RWPE1 (cell line): ENCODE measurements at regions of chr14 and their contacts with region 1.

Region 1: GRCh38 chr14:30214461-30215090 is 286.9 kb upstream of the PRKD1 start:
- DNase-seq: peak; percentile 45
- H3K27ac ChIP-seq: no peak overlapping the region
- CTCF ChIP-seq: peak; percentile 68

Region 2: DNA sequence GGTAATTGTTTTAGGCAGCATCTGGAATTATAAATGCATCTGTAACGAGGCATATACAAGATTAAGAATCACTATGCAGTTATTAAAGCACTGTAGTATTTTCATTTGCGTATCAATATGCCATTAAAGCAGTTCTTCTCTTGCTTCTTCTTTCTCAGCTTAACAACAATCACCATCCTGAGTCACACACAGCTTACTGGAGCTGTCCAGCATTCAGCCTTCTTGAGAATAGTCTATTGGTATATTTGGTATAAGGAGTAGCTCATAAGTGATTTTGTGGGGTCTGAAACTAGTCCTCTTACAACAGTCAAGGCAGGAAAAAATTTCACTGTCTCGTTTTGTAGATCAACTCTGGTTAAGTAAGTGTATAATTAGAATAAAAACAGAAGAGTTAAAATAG is 1971.0 kb before region 1 on chr14:
- CTCF ChIA-PET with region 1: no interaction called
- POLR2A ChIA-PET with region 1: no interaction called
- DNase-seq: peak; percentile 3
- H3K27ac ChIP-seq: no peak overlapping the region
- CTCF ChIP-seq: no peak

Region 3: DNA sequence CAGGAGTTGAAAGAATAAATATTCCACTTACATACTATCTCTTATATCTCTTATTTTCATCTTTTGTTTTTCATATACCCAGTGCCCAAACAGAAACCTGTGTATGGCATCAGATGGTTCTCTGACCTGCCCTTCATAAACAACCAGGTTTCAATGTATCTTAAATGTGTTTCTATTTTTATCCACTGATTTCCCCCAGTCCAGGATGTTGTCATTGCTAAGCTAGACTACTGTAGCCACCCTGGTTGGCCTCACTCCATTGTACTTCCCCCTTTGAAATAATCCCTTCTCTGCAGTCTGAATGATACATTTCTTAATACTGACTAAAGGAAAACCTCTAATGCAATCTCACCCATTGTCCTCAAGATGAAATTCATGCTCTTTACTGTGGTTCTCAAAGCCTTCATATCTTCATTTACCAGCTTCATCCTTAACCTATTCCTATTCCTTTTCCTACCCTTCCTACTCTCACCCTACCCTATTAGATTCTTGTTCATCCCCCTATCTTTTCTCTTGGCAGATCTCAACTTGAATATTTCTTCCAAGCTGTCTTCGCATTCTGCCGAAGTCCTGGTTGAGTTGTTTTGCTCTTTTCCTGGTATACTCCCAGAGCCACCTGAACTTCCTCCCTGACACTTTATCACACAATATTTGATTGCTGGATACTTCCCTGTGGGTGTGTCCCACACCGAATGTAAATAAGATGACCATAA is 1135.6 kb before region 1 on chr14:
- CTCF ChIA-PET with region 1: no interaction called
- POLR2A ChIA-PET with region 1: no interaction called
- DNase-seq: no peak
- H3K27ac ChIP-seq: no peak overlapping the region
- CTCF ChIP-seq: no peak

Region 4: GRCh38 chr14:29548948-29549370 is 665.6 kb before region 1 on chr14:
- CTCF ChIA-PET with region 1: interaction called, 13 read pairs
- POLR2A ChIA-PET with region 1: no interaction called
- DNase-seq: peak; percentile 61
- H3K27ac ChIP-seq: no peak overlapping the region
- CTCF ChIP-seq: peak; percentile 55